ENCODE measurements at regions of chr19 and their contacts with region 1.

Region 1: GRCh38 chr19:55160128-55160985 is 2.8 kb upstream of the TNNI3 start:
- DNase-seq: peak; percentile 97
- H3K4me3 Mint-ChIP-seq: peak overlapping the region; percentile 34
- H3K27ac Mint-ChIP-seq: peak overlapping the region; percentile 37
- H3K4me1 Mint-ChIP-seq: peaks cover 6% of the 10 kb centered on the region
- H3K27me3 Mint-ChIP-seq: peaks cover 37% of the 10 kb centered on the region

Region 2: DNA sequence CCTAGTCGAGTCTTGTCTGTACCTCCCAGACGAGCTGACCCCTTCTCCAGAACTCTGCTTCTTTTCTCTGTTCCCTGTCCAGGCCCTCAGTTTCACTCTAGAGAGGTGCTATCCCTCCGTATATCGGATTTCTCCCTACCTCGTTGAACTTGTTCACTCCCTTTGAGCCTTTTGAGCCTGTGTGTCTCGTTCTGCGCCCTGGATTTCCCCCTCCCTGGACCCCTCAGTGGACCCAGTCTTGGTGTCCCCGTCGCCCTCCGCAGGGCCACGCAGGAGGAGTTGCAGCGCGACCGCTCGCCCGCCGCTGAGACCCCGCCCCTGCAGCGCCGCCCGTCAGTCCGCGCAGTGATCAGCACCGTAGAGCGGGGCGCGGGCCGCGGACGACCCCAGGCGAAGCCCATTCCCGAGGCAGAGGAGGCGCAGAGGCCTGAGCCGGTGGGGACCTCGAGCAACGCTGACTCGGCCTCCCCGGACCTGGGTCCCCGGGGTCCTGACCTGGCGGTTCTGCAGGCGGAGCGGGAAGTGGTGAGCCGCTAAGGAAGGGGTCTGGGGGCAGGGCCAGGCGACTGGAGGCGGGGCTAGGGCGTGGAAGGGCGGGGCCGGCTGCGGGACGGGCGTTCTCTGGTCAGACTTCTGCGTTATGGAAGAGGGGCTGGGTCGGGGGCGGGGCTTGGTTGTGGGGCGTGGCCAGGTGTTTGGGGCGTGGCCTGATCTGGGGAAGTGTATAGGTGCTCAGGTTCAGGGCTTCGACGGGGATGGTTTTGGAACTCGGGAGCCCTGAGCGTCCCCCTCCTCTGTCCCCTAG is 79.2 kb before region 1 on chr19:
- intact Hi-C with region 1: loop called (anchors 5 kb)
- DNase-seq: peak; percentile 98
- H3K4me3 Mint-ChIP-seq: peak overlapping the region; percentile 85
- H3K27ac Mint-ChIP-seq: peak overlapping the region; percentile 89
- H3K4me1 Mint-ChIP-seq: peaks cover 17% of the 10 kb centered on the region
- H3K27me3 Mint-ChIP-seq: peaks cover 37% of the 10 kb centered on the region

Region 3: DNA sequence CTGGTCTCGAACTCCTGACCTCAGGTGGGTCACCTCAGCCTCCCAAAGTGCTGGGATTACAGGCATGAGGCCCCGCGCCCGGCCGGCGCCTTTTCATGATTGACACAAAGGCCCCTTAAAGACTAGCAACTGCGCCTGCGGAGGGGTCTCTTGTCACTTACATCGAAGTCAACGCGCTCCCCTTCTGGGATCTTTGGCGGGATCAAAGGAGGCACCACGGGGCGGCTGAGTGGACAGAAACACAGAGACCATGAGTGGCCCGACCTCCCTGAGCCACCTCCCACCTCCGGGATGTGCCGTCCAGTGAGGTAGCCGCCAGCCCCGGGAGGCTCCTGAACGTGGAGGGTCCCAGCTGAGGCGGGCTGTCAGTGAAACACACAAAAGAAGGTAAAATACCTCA is 18.7 kb before region 1 on chr19:
- intact Hi-C with region 1: loop called (anchors 2 kb)
- DNase-seq: no peak
- H3K4me3 Mint-ChIP-seq: no peak overlapping the region
- H3K27ac Mint-ChIP-seq: no peak overlapping the region
- H3K4me1 Mint-ChIP-seq: peaks cover 10% of the 10 kb centered on the region
- H3K27me3 Mint-ChIP-seq: peaks cover 25% of the 10 kb centered on the region

Region 4: GRCh38 chr19:55232296-55232622 is 71.9 kb after region 1 on chr19:
- intact Hi-C with region 1: no loop called
- DNase-seq: no peak
- H3K4me3 Mint-ChIP-seq: no peak overlapping the region
- H3K27ac Mint-ChIP-seq: no peak overlapping the region
- H3K4me1 Mint-ChIP-seq: peaks cover 2% of the 10 kb centered on the region
- H3K27me3 Mint-ChIP-seq: no peaks in the 10 kb centered on the region

Region 5: DNA sequence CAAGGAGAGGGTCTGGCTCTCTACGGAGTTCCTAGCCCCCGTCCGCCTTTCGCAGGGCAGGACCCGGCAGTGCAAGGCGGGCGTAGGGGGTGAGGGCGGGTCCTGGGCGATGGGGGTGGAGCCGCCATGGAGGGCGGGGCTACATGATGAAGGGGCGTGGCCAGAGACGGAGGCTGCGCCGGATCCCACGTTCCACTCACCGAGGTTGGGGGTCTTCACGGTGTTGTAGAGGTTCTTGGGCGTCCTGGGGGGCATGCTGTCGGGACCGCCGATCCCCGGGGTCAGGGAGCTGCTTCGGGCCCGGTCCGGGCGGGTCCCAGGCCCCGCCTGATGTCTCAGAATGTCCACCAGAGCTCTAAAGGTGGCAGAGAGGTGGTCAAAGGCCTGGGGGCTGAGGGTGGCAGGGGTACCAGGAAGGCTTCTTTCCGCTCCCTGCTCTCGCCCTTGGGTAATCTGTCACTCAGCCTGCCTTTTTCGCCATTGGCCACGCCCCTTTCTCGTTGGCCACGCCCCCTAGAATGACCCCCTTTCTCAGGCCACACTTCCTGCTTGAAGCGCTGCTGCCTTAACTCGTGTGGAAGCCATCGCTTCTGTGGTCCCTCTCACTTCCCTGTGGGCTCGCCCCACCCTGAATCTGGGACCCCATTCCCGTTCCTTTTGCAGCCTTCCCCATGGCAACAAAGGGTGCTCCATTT is 280.2 kb after region 1 on chr19:
- intact Hi-C with region 1: loop called (anchors 5 kb)
- DNase-seq: no peak
- H3K4me3 Mint-ChIP-seq: no peak overlapping the region
- H3K27ac Mint-ChIP-seq: no peak overlapping the region
- H3K4me1 Mint-ChIP-seq: peaks cover 14% of the 10 kb centered on the region
- H3K27me3 Mint-ChIP-seq: peaks cover 65% of the 10 kb centered on the region

Measured in activated CD4-positive, alpha-beta T cell treated with anti-CD3 and anti-CD28 coated beads, Interleukin-2, amount 10 ng/mL, durations not matched to agents 24 days and 14 days (primary cell).